IMR-90 (cell line): ENCODE measurements at regions of chr18 and their contacts with region 1.

Region 1: GRCh38 chr18:11518788-11519685 is 90.4 kb upstream of the SLC35G4 start:
- DNase-seq: peak; percentile 55
- ATAC-seq: peak; percentile 86
- H3K4me3 ChIP-seq: no peak overlapping the region
- H3K27ac ChIP-seq: no peak overlapping the region
- H3K4me1 ChIP-seq: no peaks in the 10 kb centered on the region
- H3K27me3 ChIP-seq: peaks cover 2% of the 10 kb centered on the region; the same call in 1 of the 2 replicates
- CTCF ChIP-seq: peak; percentile 71
- POLR2A ChIP-seq: no peak
- RAD21 ChIP-seq: peak; percentile 70

Region 2: DNA sequence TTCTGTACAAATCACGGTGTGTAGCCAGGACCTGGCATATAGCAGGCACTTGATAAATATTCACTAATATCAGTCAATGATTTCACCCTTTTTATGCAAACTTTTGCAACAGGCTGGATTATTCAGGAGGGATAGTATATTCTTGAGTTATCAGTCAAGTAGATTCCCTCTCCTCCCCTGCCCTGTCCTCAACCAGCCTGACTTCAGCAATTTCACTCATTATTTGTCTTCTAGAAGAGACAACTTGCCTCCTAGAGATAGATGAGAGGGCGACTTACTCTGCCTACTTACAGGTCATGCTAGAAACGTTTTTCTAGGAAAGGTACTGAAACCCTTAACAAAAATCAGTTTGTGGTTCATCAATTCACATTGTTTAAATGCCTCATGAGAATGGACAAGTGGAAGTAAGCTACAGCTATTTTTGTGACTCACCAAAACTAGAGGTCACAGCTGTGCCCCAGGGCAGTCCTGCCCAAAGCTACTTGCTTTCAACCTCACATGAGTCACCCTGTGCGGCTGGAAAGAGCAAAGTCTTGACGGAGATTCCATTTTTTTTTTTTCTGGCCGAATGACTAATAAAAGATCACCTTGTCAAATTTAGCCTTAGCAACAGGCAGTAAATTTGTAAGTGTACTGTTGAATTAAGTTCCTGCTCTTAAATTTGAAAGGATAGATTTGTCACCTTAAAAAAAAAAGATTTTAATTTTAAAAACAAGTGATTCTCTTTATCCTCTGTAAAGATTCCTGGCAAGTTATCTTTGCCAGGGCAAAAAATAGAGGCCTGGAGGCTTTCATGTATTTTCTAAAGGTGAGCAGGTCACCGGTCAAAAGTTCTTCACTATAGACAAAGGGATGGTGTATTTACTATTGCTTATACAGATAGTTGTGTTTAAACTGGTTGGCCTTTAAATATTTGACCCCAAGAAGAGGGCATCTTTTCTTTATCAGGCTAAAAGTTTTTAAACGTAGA is 18.6 kb before region 1 on chr18:
- CTCF ChIA-PET with region 1: interaction called, 11 read pairs
- POLR2A ChIA-PET with region 1: no interaction called
- dilution Hi-C with region 1: no loop called
- in situ Hi-C with region 1: no loop called
- intact Hi-C with region 1: no loop called
- DNase-seq: peak; percentile 98
- ATAC-seq: peak; percentile 97
- H3K4me3 ChIP-seq: no peak overlapping the region
- H3K27ac ChIP-seq: no peak overlapping the region
- H3K4me1 ChIP-seq: peaks cover 2% of the 10 kb centered on the region; the same call in 1 of the 2 replicates
- H3K27me3 ChIP-seq: no peaks in the 10 kb centered on the region
- CTCF ChIP-seq: no peak
- POLR2A ChIP-seq: no peak
- RAD21 ChIP-seq: no peak

Region 3: DNA sequence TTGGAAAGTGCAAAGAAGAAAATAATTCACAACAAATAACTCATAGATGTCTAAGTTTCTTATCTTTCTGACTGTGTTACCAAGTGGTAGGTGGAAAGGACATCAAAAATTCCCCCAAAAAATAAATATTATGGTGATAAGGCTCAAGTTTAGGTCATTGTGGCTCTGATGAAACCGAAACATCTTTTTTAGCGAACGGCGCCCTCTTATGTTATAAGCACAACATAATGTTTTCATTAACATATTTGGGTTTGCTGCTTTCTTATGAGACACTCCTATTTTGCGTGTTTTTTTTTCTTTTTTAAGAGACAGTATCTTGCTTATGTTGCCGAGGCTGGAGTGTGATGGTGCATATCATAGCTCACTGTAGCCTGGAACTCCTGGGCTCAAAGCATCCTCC is 51.7 kb after region 1 on chr18:
- CTCF ChIA-PET with region 1: no interaction called
- POLR2A ChIA-PET with region 1: no interaction called
- dilution Hi-C with region 1: no loop called
- in situ Hi-C with region 1: no loop called
- intact Hi-C with region 1: no loop called
- DNase-seq: peak; percentile 24
- ATAC-seq: peak; percentile 57; the same call in 1 of the 2 replicates
- H3K4me3 ChIP-seq: no peak overlapping the region
- H3K27ac ChIP-seq: no peak overlapping the region
- H3K4me1 ChIP-seq: no peaks in the 10 kb centered on the region
- H3K27me3 ChIP-seq: peaks cover 32% of the 10 kb centered on the region
- CTCF ChIP-seq: peak; percentile 38
- POLR2A ChIP-seq: no peak
- RAD21 ChIP-seq: peak; percentile 41; the same call in 1 of the 2 replicates